GM10248 (cell line): ENCODE measurements at regions of chr3 and their contacts with region 1.

Region 1: DNA sequence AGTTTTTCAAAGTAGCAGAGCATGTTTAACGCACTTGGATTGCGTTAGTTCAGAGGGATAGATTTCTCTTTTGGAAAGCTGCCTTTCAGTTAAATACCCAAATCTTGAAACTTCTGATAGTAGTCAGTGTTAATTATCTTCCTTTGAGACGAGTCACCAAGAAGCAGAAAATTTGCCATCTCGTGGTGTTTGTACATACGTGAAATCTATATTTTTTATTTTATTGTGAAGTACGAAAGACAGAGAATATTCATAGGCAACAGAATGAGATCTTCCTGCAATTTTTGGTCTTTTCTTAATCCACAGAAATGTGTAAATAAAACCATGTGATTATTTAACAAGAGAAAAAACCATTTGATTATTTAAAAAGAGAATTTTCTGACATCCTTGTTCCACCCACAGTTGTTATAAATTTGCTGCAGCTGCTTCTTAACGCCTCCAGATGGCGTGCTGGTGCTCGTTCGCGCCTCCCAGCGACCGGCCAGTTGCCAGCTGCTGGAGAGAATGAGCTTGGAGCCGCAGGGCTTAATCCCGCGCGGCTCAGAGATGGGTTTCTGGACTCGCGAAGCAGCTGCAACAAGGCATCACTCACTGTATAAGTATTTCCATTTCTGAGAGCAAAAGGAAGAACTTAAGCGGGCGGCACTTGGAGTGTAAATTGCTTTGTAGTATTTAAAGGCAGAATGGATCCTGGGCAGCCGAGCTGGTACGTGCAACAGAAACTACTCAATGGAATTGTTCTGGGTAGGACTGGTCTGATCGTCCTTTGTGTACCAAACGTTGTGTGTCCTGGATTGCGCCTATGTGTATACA is 10.5 kb upstream of the SLITRK3 start:
- DNase-seq: peak; percentile 53
- CTCF ChIP-seq: peak; percentile 99

Region 2: DNA sequence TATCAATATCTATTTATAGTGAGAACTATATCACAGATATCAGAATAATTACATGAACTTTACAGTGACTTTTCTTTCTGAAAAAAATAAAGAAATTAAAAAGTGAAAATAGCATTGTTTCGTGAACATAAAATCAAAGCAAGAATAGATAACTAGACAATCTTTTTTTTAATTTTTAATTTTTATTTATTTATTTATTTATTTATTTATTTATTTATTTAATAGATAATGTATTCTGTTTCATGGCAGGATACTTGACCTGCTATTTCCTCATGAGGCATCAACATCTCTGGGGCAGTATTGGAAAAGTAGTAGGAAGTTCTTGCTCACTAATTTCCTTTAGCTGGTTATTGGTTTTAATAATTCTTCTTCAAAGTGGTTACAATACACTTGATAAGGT is 43.8 kb before region 1 on chr3:
- CTCF ChIA-PET with region 1: no interaction called
- POLR2A ChIA-PET with region 1: no interaction called
- DNase-seq: no peak
- CTCF ChIP-seq: no peak

Region 3: DNA sequence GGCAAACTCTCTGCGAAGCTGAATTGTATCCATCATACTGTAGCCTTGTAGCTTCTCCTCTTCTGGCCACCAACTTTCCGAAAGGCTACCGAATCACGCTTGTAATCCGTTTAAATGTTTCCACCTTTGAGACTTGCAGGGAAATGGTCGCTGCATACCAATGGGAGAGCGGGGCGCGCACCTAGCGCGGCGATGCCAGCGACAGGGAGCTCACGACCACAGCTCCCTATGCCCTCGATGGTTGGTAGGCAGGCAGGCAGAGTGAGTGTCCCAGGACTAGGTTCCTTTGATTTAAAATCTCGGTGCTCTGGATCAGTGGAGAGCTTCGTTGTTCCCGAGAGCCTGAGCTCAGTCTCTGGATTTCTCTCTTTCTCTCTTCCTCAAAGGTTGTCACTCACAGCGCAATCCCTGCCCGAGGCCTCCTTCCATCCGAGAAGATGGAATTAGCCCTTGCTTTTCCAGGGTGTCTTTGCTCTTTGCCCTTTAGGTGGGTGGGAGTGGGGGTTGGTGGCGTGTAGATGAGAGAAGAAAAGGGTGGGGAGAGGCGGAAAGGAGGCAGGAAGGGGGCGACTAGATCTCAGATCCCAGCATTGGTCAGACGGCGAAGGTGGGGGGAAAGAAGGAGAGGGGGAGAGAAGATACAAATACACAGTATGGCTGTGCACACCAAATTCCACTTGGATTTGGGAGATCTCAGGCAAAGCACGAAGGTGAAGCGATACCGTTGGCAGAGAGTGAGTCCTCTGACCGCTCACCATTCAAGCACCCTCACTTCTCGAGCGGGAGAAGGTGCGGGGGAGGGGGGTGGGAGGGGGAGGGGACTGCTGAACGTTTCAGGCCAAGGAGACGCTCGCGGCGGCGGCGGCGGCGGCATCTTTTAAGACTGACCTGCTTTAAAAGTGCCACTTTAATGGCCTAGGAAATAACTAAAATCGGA is 10.8 kb before region 1 on chr3 and contains the start of gene SLITRK3:
- CTCF ChIA-PET with region 1: interaction called, 25 read pairs
- POLR2A ChIA-PET with region 1: no interaction called
- DNase-seq: peak; percentile 15
- CTCF ChIP-seq: no peak